ENCODE measurements at regions of chr14 and their contacts with region 1.

Region 1: DNA sequence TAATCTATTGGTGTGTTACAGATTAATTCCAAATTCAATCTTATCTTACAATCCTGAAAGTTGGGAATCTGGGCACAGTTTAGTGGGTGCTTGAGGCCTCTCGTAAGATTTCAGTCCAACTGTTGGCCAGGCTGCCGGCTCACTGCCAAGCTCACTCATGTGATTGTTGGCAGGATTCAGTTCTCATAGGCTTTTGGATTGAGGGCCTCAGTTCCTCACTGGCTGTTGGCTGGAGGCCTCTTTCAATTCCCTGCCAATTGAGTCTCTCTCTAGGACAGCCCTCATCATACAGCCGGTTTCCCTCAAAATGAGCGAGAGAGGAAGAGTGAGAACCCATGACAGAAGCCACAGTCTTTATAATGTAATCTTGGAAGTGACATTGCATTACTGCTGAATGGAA is 123.5 kb upstream of the FBXO33 start:
- DNase-seq: no peak
- ATAC-seq: no peak
- H3K4me3 ChIP-seq: no peak overlapping the region
- H3K27ac ChIP-seq: no peak overlapping the region
- H3K4me1 ChIP-seq: no peaks in the 10 kb centered on the region
- H3K27me3 ChIP-seq: no peaks in the 10 kb centered on the region
- CTCF ChIP-seq: no peak
- EP300 ChIP-seq: no peak
- POLR2A ChIP-seq: no peak
- RAD21 ChIP-seq: no peak

Region 2: DNA sequence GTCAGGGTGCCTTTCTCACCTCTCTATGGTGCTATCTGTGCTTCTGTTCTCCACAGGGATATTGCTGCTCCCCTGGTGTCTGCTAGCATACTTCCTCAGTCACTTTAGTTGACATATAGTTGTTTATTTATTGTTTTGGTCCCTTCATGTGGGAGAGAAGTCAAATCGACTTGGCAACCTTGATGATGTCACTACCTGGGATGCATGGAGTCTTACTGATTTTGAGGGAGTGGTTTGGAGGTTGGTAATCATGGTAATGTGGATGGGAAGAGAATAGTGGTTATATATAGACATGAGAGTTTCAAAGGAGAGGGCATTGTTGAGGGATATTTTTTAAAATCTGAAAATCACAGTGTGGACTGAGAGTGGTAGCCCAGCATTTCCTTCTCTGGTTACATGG is 49.9 kb before region 1 on chr14:
- CTCF ChIA-PET with region 1: no interaction called
- POLR2A ChIA-PET with region 1: no interaction called
- RAD21 ChIA-PET with region 1: no interaction called
- SMC1A ChIA-PET with region 1: no interaction called
- in situ Hi-C with region 1: no loop called
- intact Hi-C with region 1: loop called (anchors 2 kb)
- DNase-seq: no peak
- ATAC-seq: no peak
- H3K4me3 ChIP-seq: no peak overlapping the region
- H3K27ac ChIP-seq: no peak overlapping the region
- H3K4me1 ChIP-seq: no peaks in the 10 kb centered on the region
- H3K27me3 ChIP-seq: no peaks in the 10 kb centered on the region
- CTCF ChIP-seq: no peak
- EP300 ChIP-seq: no peak
- POLR2A ChIP-seq: no peak
- RAD21 ChIP-seq: no peak